MCF 10A (cell line): ENCODE measurements at regions of chr3 and their contacts with region 1.

Region 1: GRCh38 chr3:48472915-48473616 is 26.5 kb downstream of the ATRIP start:
- DNase-seq: peak; percentile 93
- H3K4me3 Mint-ChIP-seq: peak overlapping the region; percentile 89
- H3K27ac Mint-ChIP-seq: peak overlapping the region; percentile 98
- H3K4me1 Mint-ChIP-seq: peaks cover 10% of the 10 kb centered on the region
- H3K27me3 Mint-ChIP-seq: no peaks in the 10 kb centered on the region
- CTCF ChIP-seq: peak; percentile 23

Region 2: GRCh38 chr3:48429317-48429959 is 43.6 kb before region 1 on chr3:
- CTCF ChIA-PET with region 1: no interaction called
- POLR2A ChIA-PET with region 1: interaction called, 11 read pairs
- intact Hi-C with region 1: no loop called
- DNase-seq: peak; percentile 69
- H3K4me3 Mint-ChIP-seq: peak overlapping the region; percentile 99
- H3K27ac Mint-ChIP-seq: peak overlapping the region; percentile 98
- H3K4me1 Mint-ChIP-seq: peaks cover 71% of the 10 kb centered on the region
- H3K27me3 Mint-ChIP-seq: no peaks in the 10 kb centered on the region
- CTCF ChIP-seq: no peak

Region 3: GRCh38 chr3:48507351-48508061 is 34.4 kb after region 1 on chr3:
- CTCF ChIA-PET with region 1: interaction called, 3 read pairs
- POLR2A ChIA-PET with region 1: interaction called, 14 read pairs
- intact Hi-C with region 1: loop called (anchors 1 kb)
- DNase-seq: peak; percentile 84
- H3K4me3 Mint-ChIP-seq: peak overlapping the region; percentile 35
- H3K27ac Mint-ChIP-seq: peak overlapping the region; percentile 59
- H3K4me1 Mint-ChIP-seq: peaks cover 14% of the 10 kb centered on the region
- H3K27me3 Mint-ChIP-seq: no peaks in the 10 kb centered on the region
- CTCF ChIP-seq: peak; percentile 36

Region 4: GRCh38 chr3:48548729-48549705 is 76.0 kb after region 1 on chr3:
- CTCF ChIA-PET with region 1: interaction called, 22 read pairs
- POLR2A ChIA-PET with region 1: no interaction called
- intact Hi-C with region 1: no loop called
- DNase-seq: peak; percentile 80
- H3K4me3 Mint-ChIP-seq: no peak overlapping the region
- H3K27ac Mint-ChIP-seq: no peak overlapping the region
- H3K4me1 Mint-ChIP-seq: no peaks in the 10 kb centered on the region
- H3K27me3 Mint-ChIP-seq: no peaks in the 10 kb centered on the region
- CTCF ChIP-seq: peak; percentile 97